Common myeloid progenitor, CD34-positive (primary cell): ENCODE measurements at regions of chr14 and their contacts with region 1.

Region 1: GRCh38 chr14:24256960-24257359 is 6.0 kb downstream of the TGM1 start:
- DNase-seq: no peak
- H3K4me3 ChIP-seq: no peak overlapping the region
- H3K27ac ChIP-seq: no peak overlapping the region
- H3K4me1 ChIP-seq: no peaks in the 10 kb centered on the region
- H3K27me3 ChIP-seq: no peaks in the 10 kb centered on the region

Region 2: DNA sequence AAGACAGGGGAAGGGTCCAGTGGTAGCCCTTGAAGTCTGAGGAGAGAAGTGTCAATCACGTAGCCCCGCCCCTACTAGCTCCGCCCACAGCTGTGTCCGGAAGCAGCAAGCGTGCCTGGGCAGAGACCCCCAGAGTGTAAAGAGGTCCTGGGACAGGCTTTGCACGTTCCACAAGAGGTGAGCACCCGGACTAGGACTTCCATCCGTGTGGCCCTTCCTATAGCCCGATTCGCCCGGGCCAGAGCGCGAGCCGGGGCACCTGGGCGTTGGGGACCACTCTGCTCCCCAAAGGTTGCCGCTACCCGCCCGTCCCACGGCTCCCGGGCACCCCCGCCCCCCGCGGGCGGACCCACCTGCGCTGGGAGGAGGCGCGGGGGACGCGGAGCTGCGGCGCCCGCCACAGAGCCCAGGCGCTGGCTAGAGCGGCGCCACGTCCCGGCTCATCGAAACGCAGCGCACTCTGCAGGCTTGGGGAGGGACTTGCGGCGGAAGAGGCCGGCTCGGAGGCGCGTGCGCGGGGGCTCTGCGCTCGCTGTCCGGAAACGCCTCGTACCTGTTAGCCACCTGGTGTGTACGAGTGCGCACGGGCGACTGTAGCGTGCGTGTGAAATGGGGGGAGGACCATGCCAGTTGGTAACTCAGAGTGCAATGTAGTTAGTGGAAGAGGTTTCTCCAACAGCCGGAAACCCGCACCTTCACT is 14.3 kb after region 1 on chr14 and contains the start of gene RABGGTA:
- CTCF ChIA-PET with region 1: interaction called, 27 read pairs
- POLR2A ChIA-PET with region 1: interaction called, 4 read pairs
- DNase-seq: peak; percentile 93 to 96 (median 96)
- H3K4me3 ChIP-seq: peak within 1 kb of the TSS; percentile 74 to 96 (median 85)
- H3K27ac ChIP-seq: peak within 1 kb of the TSS; percentile 80 to 94
- H3K4me1 ChIP-seq: peaks cover 2 to 38% (median 18%) of the 10 kb centered on the region in 4 experiments
- H3K27me3 ChIP-seq: no peaks in the 10 kb centered on the region

Region 3: GRCh38 chr14:24339284-24340151 is 82.6 kb after region 1 on chr14 and contains the start of gene RIPK3:
- CTCF ChIA-PET with region 1: no interaction called
- POLR2A ChIA-PET with region 1: no interaction called
- DNase-seq: peak in 2 of 3 donors; percentile 62 to 74
- H3K4me3 ChIP-seq: peak within 1 kb of the TSS; percentile 43 to 91 (median 75)
- H3K27ac ChIP-seq: peak within 1 kb of the TSS in 1 of 2 experiments; percentile 53
- H3K4me1 ChIP-seq: peaks cover 7 to 40% (median 38%) of the 10 kb centered on the region in 4 experiments
- H3K27me3 ChIP-seq: peaks cover 0 to 10% (median 2%) of the 10 kb centered on the region in 5 experiments

Region 4: DNA sequence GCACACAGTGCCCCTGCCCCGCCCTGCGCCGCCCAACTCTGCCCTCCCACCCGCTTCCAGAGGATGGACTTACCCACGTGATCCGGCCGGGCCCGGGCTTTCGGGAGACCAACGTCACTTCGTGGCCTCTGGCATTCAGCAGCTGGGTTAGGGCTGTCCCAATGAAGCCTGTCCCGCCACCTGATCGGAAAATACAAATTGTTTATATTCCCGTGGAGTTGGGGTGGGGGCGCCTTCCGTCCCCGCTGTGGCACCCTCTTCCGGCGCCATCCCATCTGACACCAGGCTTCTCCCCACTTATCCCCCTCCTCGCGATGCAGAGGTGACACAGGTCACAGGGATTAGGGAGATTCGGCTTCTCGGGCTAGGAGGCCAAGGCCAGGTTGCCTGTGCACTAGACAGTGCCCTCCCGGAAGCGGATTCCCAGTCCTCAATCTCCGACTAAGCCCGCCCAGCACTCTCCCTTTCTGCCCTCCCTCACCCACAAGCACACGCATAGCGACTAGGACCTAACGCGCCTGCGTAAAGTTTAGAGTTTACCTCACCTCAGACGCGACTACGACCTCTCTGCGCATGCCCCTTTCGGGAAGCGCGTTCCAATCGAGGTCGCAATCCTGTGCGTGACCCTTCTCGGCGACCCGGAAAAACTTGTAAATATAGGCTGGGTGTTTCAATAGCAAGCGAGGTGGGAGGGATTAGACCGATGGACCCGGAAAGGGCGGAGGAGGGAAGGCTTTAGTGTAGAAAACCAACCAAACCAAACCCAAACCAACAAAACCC is 185.5 kb after region 1 on chr14 and contains the start of gene SDR39U1:
- CTCF ChIA-PET with region 1: no interaction called
- POLR2A ChIA-PET with region 1: no interaction called
- DNase-seq: peak; percentile 99 to 100 (median 99)
- H3K4me3 ChIP-seq: peak within 1 kb of the TSS; percentile 60 to 96 (median 83)
- H3K27ac ChIP-seq: peak within 1 kb of the TSS; percentile 92 to 97
- H3K4me1 ChIP-seq: peaks cover 6 to 38% (median 31%) of the 10 kb centered on the region in 4 experiments
- H3K27me3 ChIP-seq: no peaks in the 10 kb centered on the region